Naive thymus-derived CD4-positive, alpha-beta T cell (primary cell): ENCODE measurements at regions of chr10 and their contacts with region 1.

Region 1: DNA sequence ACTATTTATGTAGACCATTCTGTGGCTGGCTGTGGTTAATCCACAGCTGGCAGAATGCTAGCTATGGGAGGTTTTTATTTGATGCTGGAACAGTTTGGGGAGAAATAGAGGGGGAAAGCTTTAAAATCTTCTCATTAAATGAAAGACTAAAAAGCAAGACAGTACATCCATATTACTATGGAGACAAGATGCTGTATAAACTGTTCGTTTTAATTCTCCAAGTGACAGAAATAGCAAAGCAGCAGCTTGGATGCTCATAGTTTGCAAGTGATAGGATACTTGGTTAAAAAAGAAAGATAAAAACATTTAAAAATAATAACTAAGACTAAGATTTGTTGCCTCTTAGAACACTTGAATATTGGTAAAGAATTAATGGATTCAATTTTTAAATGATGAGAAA is 304.9 kb upstream of the KAT6B start:
- DNase-seq: no peak
- ATAC-seq: no peak
- H3K4me3 ChIP-seq: no peak overlapping the region
- H3K4me3 Mint-ChIP-seq: no peak overlapping the region
- H3K27ac ChIP-seq: no peak overlapping the region
- H3K27ac Mint-ChIP-seq: peak overlapping the region in 1 of 9 donors; percentile 41
- H3K4me1 ChIP-seq: no peaks in the 10 kb centered on the region
- H3K4me1 Mint-ChIP-seq: peaks cover 0 to 3% (median 0%) of the 10 kb centered on the region in 7 donors
- H3K27me3 ChIP-seq: no peaks in the 10 kb centered on the region
- H3K27me3 Mint-ChIP-seq: no peaks in the 10 kb centered on the region

Region 2: DNA sequence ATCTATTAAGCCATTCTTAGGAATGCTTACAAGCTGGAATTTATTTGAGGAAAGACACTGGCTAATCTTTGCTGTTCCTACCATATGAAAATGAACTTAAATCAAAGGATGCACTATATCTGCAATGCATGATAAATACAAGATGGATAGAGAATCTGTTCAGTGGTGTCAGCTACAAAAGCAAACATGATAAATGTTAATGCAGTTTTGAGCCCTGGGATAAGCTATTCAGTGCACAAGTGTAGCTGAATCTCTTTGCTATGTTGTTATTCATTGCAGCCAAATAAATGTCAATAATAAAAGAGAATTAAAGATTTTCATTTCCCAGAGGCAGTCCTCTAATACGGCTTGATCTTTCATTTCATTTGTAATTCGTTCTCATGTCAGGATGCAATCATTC is 81.0 kb after region 1 on chr10:
- CTCF ChIA-PET with region 1: no interaction called
- POLR2A ChIA-PET with region 1: no interaction called
- intact Hi-C with region 1: loop called in 1 of 2 experiments (anchors 5 kb)
- DNase-seq: no peak
- ATAC-seq: no peak
- H3K4me3 ChIP-seq: no peak overlapping the region
- H3K4me3 Mint-ChIP-seq: no peak overlapping the region
- H3K27ac ChIP-seq: no peak overlapping the region
- H3K27ac Mint-ChIP-seq: no peak overlapping the region
- H3K4me1 ChIP-seq: no peaks in the 10 kb centered on the region
- H3K4me1 Mint-ChIP-seq: peaks cover under 1 to 23% (median 4%) of the 10 kb centered on the region in 7 donors
- H3K27me3 ChIP-seq: no peaks in the 10 kb centered on the region
- H3K27me3 Mint-ChIP-seq: no peaks in the 10 kb centered on the region